Calu3 (cell line): ENCODE measurements at regions of chr4 and their contacts with region 1.

Region 1: DNA sequence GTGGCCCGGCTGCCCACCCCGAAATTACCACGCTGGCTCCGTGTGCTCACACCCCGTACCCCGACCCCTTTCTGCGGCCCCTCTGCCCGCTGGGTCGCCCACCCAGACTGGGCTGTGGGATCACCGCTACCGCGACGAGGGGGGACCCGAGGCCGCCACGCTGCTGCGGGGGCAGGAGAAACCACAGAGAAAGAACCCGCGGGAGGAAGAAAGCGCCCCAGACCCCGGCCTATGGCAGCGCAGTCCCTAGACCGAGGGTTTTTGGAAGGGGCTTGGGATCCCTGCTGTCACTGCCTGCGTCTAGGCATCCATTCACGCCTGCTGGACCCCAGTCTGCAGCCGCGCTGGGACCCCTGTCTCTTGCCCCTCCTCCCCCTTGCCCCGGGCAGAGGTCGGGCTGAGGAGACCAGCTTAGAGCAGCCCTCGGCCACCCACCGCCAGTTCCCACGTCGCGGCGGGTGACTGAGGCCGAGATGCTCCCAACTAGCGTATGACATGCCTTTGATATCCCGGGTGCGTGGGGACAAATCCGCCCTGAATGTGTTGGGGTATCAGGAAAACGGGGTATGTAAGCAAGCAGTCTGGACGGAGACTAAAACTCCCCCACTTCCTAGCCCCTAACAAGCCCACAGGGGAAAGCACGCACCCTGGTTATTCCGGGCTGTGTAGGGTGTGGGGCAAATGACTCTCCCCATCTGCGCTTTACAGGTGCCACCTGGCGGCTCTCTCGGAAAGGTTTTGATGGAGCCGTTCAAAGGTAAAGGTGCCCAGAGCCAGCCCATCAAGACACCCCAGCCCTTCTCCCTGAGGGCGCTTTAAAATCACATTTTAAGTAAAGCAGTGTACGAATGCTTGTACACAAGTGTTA is 862 bp upstream of the INPP4B start:
- DNase-seq: peak; percentile 74
- H3K4me3 Mint-ChIP-seq: peak overlapping the region; percentile 93
- H3K27ac Mint-ChIP-seq: no peak overlapping the region
- H3K4me1 Mint-ChIP-seq: peaks cover 22% of the 10 kb centered on the region
- H3K27me3 Mint-ChIP-seq: no peaks in the 10 kb centered on the region
- CTCF ChIP-seq: peak; percentile 41

Region 2: DNA sequence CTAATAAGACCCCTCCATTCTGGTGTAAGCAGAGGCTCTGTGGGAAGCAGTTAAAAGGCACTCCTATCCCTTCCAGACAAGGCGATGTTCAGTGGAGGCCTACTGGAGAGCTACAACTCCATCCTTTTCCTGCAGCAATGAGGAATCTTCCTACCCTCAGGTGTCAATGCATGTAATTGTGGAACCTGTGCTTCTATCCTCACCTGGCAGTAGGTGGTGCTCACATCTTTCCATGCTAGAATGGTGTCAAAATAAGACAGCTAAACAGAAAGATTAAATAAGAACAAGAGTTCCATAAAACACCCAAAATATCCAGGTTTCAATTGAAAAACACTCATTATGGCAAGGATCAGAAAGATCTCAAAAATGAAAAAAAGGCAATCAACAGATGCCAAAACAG is 986.0 kb before region 1 on chr4:
- CTCF ChIA-PET with region 1: interaction called, 3 read pairs
- intact Hi-C with region 1: loop called (anchors 5 kb)
- DNase-seq: peak; percentile 27
- H3K4me3 Mint-ChIP-seq: no peak overlapping the region
- H3K27ac Mint-ChIP-seq: no peak overlapping the region
- H3K4me1 Mint-ChIP-seq: peaks cover 34% of the 10 kb centered on the region
- H3K27me3 Mint-ChIP-seq: no peaks in the 10 kb centered on the region
- CTCF ChIP-seq: no peak

Region 3: DNA sequence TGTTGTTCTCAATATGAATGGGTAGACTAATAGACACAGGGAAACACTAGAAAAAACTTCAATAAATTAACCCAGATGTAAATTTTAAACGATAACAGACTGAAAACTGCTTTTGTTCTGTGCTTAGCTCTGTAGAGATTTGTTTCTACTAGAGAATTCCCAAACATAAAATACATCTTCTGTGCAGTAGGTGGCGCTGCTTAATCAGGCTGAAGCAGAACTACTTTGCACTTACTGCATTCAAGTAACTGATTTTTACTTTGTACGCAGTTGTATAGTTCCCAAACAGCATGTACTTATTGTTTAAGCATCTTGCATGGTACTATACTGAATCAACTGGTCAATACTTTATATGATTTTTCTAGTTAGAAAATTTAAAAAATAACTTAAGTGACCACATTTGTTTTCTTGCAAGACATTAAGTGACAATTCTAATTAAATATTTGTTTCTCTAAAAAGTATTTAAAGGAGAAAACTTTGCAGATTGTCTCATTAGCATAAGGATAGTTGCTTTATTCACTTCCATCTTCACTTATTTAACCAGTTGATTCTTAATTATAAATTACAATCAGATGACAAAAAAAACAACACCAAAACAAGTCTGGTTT is 720.0 kb before region 1 on chr4:
- CTCF ChIA-PET with region 1: interaction called, 4 read pairs
- intact Hi-C with region 1: loop called (anchors 2 kb)
- DNase-seq: peak; percentile 56
- H3K4me3 Mint-ChIP-seq: no peak overlapping the region
- H3K27ac Mint-ChIP-seq: no peak overlapping the region
- H3K4me1 Mint-ChIP-seq: peaks cover 19% of the 10 kb centered on the region
- H3K27me3 Mint-ChIP-seq: no peaks in the 10 kb centered on the region
- CTCF ChIP-seq: peak; percentile 66

Region 4: DNA sequence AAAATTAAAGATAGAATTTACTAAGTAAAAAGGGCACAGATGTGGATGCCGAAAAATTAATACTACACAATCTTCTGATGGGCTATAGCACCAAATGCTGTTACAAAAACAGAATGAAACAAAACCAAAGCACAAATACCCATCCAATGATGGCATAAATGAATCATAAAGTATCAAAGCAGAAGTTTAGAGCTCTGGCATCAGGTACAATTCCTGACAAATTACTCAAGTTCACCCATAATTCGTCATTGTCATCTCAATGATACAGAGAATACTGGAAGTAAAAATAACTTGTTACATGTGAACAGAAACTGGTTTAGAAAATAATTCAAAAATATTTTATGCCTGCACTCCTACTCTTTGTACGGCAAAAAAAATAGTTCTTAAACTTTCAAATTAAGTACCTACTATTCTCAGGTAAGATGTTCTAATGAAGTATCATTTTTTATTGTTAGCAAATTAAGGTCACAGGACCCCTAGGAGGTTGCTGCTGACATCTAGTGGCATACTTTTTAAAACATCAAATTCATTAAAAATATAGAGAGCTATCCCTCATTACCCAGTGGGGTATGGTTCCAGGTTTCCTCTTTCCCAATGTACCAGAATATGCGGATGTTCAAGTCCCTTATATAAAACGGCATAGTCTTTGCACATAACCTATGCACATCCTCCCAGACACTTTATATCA is 127.0 kb before region 1 on chr4:
- CTCF ChIA-PET with region 1: no interaction called
- intact Hi-C with region 1: loop called (anchors 10 kb)
- DNase-seq: no peak
- H3K4me3 Mint-ChIP-seq: no peak overlapping the region
- H3K27ac Mint-ChIP-seq: no peak overlapping the region
- H3K4me1 Mint-ChIP-seq: peaks cover 15% of the 10 kb centered on the region
- H3K27me3 Mint-ChIP-seq: no peaks in the 10 kb centered on the region
- CTCF ChIP-seq: no peak

Region 5: GRCh38 chr4:143085224-143085623 is 238.3 kb after region 1 on chr4:
- CTCF ChIA-PET with region 1: no interaction called
- intact Hi-C with region 1: loop called (anchors 10 kb)
- DNase-seq: no peak
- H3K4me3 Mint-ChIP-seq: no peak overlapping the region
- H3K27ac Mint-ChIP-seq: no peak overlapping the region
- H3K4me1 Mint-ChIP-seq: peaks cover 61% of the 10 kb centered on the region
- H3K27me3 Mint-ChIP-seq: no peaks in the 10 kb centered on the region
- CTCF ChIP-seq: no peak

Region 6: GRCh38 chr4:143335979-143336780 is 489.2 kb after region 1 on chr4:
- CTCF ChIA-PET with region 1: no interaction called
- intact Hi-C with region 1: no loop called
- DNase-seq: peak; percentile 76
- H3K4me3 Mint-ChIP-seq: peak overlapping the region; percentile 86
- H3K27ac Mint-ChIP-seq: no peak overlapping the region
- H3K4me1 Mint-ChIP-seq: peaks cover 8% of the 10 kb centered on the region
- H3K27me3 Mint-ChIP-seq: no peaks in the 10 kb centered on the region
- CTCF ChIP-seq: no peak